ENCODE measurements at regions of chr9 and their contacts with region 1.

Region 1: DNA sequence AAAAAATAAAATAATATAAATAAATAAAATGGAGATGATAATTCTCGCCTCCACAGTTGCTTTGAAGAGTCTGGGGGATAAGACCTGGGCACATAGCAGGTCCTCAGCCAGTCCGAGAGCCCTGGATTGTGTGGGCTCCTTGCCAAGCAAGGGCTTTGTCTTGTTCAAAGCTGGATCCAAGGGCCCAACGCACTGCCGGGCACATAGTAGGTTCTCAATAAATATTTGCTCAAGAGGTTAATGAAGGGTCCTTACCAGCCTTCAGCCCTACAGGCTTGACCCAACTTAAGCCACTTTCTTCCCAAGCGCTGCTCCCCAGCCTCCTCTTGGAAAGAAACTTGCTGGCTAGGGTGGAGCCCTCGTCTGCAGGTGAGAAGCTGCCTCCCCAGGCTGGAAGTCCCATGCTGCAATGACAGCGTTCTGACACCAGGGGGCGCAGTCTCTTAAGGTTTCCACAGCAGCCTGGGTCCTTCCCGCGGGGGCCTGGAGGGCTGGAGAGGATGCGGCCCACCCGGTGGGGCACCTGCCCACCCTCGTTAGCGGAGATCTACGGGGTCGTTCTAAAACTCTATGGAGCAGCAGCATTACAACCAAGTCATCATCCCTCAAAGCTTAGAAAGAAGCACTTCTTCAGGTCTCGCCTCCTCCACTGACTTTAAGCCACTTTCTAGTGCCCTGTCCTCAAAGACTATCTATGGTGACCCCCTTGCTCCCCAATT is 115.2 kb downstream of the LHX2 start:
- DNase-seq: peak; percentile 36 to 95 (median 76)

Region 2: DNA sequence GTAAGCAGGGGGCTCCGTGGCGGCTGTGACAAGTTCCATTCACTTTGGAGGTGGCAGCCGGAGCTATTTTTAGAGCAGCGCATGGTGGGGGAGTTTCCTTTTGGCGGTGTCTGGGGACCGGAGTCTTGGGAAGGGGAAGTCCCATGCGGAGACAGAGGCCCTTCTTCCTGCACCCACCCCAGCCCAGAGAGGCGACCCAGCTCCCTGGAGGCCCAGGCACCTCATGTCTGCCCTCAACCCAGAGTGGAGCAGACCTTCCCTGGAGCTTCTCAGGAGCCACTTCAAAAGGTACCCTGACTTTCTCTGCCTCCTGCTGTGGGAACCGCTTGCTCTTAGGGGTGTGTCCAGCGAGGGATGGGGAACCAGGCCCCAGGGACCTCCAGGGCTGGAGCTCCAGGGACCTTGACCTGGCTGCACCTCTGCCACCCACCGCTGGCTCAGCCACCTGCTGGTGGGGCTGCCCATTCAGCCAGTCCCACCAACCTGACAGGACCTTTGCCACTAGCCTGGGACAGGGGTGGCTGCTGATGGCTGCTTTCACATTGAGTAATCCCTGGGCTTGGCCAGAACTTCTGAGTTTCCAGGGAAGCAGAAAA is 165.2 kb after region 1 on chr9:
- intact Hi-C with region 1: loop called (anchors 2 kb)
- DNase-seq: peak in 2 of 10 donors; percentile 21 to 89

Region 3: DNA sequence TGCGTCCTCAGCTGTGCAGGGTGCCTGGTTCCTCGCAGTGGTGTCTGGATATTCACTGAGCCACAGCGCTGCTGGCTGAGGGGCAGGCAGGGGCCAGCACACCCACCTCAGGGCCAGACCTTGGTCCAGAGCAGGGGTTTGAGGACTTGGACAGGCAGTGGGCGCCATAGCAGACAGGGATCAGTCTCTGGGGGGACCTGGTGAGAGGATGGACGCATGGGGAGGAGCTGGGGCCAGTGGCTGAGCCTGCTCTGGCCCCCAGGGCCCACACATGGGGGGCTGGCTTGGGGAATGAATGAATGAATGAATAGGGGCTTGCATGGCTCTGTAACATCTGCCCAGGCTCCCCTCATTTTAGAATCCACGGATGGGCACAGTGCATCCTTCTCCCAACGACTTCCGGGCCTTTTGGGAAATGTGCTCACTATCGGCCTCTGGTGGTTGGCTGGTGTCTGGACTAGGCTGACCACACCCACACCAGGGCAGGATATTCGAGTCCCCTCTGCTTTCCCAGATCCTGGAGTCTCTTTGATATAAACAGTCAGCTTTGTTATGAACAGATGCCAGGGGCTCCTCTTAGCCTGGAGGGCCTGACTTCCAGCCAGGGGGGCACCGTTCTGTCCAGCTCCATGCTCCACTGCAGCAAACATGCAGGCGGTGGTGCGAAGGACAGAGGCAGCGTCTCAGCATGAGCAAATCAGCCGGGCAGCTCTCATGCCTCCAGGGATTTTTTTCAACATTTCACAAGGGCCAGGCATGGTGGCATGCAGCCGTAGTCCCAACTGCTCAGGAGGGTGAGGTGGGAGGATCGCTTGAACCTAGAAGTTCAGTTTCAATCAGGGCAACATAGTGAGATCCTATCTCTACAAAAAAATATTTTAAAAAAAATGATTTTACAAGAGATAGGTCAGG is 193.6 kb after region 1 on chr9:
- intact Hi-C with region 1: loop called (anchors 10 kb)
- DNase-seq: peak in 8 of 10 donors; percentile 47 to 95 (median 74)

Measured in posterior cingulate gyrus (tissue), 11 donors.